Right ventricle myocardium inferior (tissue), 1 donor: ENCODE measurements at regions of chr11 and their contacts with region 1.

Region 1: GRCh38 chr11:9160166-9160565 is 68.8 kb upstream of the SCUBE2 start:
- DNase-seq: no peak
- ATAC-seq: no peak

Region 2: GRCh38 chr11:9506489-9507276 is 346.5 kb after region 1 on chr11:
- intact Hi-C with region 1: loop called (anchors 10 kb)
- DNase-seq: no peak
- ATAC-seq: peak; percentile 81